ENCODE measurements at regions of chr14 and their contacts with region 1.

Region 1: DNA sequence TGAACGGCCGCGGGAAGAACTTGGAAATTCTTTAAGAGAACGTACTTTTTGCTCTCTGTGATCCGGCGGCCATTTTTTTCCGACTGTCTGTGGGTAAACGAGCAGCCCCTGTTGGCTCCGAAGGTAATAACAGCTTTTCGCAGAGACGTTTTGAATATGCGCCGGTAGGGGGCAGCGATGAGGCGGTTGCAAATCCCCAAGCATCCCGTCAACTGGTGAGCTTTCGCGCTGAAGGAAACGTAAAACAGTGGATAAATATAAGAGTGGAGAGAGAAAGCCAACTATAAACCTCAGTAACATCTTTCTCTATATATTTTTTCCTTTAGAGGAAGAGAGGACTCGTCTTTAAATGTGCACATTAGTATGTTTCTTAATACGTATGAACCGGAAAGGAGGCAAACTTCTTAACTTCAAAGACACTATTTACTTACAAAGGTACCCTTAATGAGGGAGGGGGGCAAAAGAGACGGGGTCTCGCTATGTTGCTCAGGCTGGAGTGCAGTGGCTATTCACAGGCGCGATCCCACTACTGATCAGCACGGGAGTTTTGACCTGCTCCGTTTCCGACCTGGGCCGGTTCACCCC is 9.6 kb upstream of the NEMF start:
- DNase-seq: peak; percentile 93
- H3K4me3 Mint-ChIP-seq: no peak overlapping the region
- H3K27ac Mint-ChIP-seq: no peak overlapping the region
- H3K4me1 Mint-ChIP-seq: peaks cover 24% of the 10 kb centered on the region
- H3K27me3 Mint-ChIP-seq: peaks cover 2% of the 10 kb centered on the region

Region 2: GRCh38 chr14:49620182-49621113 is 241.7 kb before region 1 on chr14 and contains the starts of genes MGAT2 and RPL36AL:
- CTCF ChIA-PET with region 1: interaction called, 12 read pairs
- POLR2A ChIA-PET with region 1: interaction called, 18 read pairs
- intact Hi-C with region 1: no loop called
- DNase-seq: peak; percentile 98
- H3K4me3 Mint-ChIP-seq: peak within 1 kb of the TSS; percentile 96
- H3K27ac Mint-ChIP-seq: peak within 1 kb of the TSS; percentile 96
- H3K4me1 Mint-ChIP-seq: peaks cover 39% of the 10 kb centered on the region
- H3K27me3 Mint-ChIP-seq: no peaks in the 10 kb centered on the region
- total RNA-seq, gene MGAT2: 40.4 to 43.7 TPM
- total RNA-seq, gene RPL36AL: 314 to 320 TPM

Region 3: GRCh38 chr14:49778421-49778820 is 83.8 kb before region 1 on chr14:
- CTCF ChIA-PET with region 1: no interaction called
- POLR2A ChIA-PET with region 1: no interaction called
- intact Hi-C with region 1: no loop called
- DNase-seq: no peak
- H3K4me3 Mint-ChIP-seq: no peak overlapping the region
- H3K27ac Mint-ChIP-seq: no peak overlapping the region
- H3K4me1 Mint-ChIP-seq: peaks cover 8% of the 10 kb centered on the region
- H3K27me3 Mint-ChIP-seq: no peaks in the 10 kb centered on the region

Region 4: DNA sequence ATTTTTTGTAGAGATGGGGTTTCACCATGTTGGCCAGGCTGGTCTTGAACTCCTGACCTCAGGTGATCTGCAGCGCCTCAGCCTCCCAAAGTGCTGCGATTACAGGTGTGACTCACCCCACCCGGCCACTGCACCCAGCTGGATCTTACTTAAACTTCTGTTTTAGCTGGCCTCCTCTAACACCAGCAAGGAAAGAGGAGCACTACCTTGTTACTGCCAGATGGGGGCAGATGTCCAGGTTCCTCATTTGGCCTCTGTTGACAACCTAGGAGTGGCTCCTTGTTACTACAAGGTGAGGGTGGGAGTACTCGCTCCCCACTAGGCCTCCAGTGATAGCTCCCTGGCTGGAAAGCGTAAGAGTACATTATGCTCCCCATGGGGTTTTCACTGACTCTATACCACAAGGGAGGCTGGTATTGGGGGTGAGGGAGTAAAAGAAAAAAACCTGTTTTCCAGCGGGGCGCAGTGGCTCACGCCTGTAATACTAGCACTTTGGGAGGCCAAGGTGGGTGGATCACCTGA is 17.6 kb after region 1 on chr14:
- CTCF ChIA-PET with region 1: interaction called, 70 read pairs
- POLR2A ChIA-PET with region 1: interaction called, 5 read pairs
- intact Hi-C with region 1: no loop called
- DNase-seq: peak; percentile 87
- H3K4me3 Mint-ChIP-seq: peak overlapping the region; percentile 12
- H3K27ac Mint-ChIP-seq: peak overlapping the region; percentile 62
- H3K4me1 Mint-ChIP-seq: peaks cover 35% of the 10 kb centered on the region
- H3K27me3 Mint-ChIP-seq: no peaks in the 10 kb centered on the region

Region 5: GRCh38 chr14:49971156-49972130 is 109.3 kb after region 1 on chr14:
- CTCF ChIA-PET with region 1: interaction called, 6 read pairs
- POLR2A ChIA-PET with region 1: interaction called, 9 read pairs
- intact Hi-C with region 1: loop called (anchors 2 kb)
- DNase-seq: peak; percentile 78
- H3K4me3 Mint-ChIP-seq: peak overlapping the region; percentile 62
- H3K27ac Mint-ChIP-seq: peak overlapping the region; percentile 95
- H3K4me1 Mint-ChIP-seq: peaks cover 61% of the 10 kb centered on the region
- H3K27me3 Mint-ChIP-seq: no peaks in the 10 kb centered on the region

Region 6: DNA sequence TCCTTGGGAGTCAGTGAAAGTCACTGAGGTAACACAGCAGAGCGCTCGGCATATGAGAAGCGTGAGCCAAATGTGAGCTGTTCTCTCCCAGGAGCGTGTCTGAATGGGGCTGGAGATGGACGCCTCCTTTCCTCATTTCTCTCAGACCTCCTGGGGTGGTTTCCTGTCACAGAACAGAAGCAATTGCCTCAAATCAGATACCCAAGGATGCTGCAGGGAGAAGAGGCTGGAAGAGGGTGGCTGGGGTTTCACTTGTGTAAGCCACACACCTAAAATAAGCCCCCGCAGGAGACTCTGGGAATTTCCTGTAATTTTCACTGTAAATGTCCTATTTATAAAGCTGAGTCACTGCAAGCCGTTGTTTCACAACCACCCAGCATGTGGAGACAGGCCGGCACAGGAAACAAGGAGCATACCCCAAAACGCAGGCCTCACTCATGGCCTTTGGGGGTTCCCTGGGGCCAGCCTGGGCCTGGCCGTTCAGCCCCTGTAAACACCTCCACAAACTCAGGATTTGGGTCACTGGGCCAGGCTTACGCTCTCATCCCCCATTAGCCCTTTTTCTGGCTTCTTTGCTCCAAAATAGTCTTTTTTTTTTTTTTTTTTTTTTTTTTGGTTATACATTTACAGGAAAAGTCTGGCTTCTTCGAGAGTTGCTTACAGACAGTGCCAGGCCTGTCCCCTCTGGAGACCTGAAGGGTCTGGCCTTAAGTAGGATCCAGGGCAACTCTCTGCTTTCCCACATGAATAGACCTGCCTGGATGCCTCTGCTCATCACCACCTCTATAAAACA is 198.9 kb after region 1 on chr14:
- CTCF ChIA-PET with region 1: interaction called, 32 read pairs
- POLR2A ChIA-PET with region 1: interaction called, 32 read pairs
- intact Hi-C with region 1: loop called (anchors 1 kb)
- DNase-seq: peak; percentile 71
- H3K4me3 Mint-ChIP-seq: peak overlapping the region; percentile 96
- H3K27ac Mint-ChIP-seq: peak overlapping the region; percentile 99
- H3K4me1 Mint-ChIP-seq: peaks cover 73% of the 10 kb centered on the region
- H3K27me3 Mint-ChIP-seq: no peaks in the 10 kb centered on the region

Region 7: DNA sequence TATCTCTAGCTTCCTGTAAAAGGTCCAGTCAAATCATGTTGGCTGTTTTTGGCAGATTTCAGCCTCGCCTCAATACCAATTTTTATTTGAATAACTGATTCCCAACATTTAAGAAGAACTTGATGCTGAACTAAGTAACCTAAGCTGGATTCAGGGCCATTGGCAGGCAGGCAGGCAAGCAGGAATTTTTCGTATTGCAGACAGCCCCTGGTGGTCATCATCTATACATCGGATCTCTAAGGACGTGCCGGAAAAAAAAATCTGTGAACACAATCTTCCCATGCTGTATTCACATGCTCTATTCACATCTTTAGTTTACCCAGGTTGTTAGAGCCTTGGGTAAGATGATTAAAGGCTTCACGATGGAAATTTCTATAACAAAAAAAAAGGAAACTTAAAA is 247.2 kb after region 1 on chr14:
- CTCF ChIA-PET with region 1: interaction called, 37 read pairs
- POLR2A ChIA-PET with region 1: interaction called, 4 read pairs
- intact Hi-C with region 1: loop called (anchors 1 kb)
- DNase-seq: no peak
- H3K4me3 Mint-ChIP-seq: no peak overlapping the region
- H3K27ac Mint-ChIP-seq: no peak overlapping the region
- H3K4me1 Mint-ChIP-seq: peaks cover 46% of the 10 kb centered on the region
- H3K27me3 Mint-ChIP-seq: no peaks in the 10 kb centered on the region